KBM-7 (cell line): ENCODE measurements at regions of chr11 and their contacts with region 1.

Region 1: DNA sequence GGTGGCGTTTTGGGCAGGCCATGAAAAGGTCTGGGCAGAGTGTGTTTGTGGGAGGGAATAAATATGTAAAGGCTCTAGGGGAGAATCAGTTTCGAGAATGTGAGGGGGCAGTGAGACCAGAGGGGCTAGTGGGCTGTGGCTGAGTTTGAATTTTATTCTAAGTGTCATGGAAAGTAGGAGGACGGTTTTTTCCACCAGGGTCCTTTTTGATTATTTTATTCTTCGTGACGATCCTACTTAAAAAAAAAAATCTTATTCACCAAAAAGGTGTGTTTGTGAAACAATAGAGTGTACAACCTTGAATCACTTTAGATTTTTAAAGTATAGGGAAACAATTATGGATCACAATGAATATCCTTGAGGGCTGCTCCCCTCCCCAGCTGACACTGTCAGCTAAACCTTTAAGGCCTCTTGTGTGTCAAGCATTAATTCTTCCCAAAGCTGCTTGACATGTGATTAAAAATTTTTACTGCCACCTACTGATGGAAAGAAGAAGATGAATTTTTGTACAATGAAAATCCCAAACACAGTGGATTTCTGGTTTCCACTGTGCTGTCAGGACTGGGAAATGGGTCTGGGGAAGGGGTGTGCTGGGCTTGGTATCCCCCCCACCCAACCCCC is 107.5 kb upstream of the OR4B1 start:
- DNase-seq: peak; percentile 71

Region 2: GRCh38 chr11:47176328-47177228 is 932.6 kb before region 1 on chr11 and contains the start of gene ARFGAP2:
- in situ Hi-C with region 1: no loop called
- DNase-seq: peak; percentile 96

Region 3: GRCh38 chr11:47967577-47968425 is 141.4 kb before region 1 on chr11:
- in situ Hi-C with region 1: loop called (anchors 10 kb)
- DNase-seq: no peak